PC-9 (cell line): ENCODE measurements at regions of chr14 and their contacts with region 1.

Region 1: DNA sequence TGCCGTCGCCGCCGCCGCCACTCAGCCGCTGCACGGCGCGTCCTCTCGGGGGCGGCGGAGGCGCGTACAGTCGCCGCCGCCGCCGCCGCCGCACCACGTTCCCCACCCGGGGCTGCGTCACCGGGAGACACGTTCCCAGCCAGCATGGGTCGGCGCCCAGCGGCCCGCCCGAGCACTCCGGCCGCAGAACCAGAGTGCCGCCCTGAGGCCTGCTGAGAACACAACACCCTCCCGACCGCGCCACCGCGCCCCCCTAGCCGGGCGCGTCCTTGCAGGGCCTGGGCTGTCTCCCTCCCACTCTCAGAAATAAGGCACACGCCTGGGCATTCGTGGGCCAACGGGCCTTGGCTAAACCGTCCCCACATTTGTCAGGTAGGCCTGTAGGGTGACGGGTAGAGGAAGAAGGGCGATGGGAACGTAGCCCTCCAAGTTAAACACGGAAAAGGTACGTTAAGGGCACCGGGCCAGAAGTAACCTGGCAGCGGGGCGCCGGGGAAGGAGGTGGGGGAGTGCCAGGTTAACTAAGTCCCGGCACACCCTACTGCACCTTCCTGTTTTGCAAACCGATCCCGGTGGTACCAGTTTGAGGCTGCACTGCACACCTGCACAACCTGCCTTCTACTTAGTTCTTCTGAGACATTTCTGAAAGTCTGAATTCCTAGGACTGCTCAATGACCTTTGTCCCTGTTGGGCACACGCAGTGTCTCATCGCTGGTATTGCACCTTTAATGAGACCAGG is at the start of gene MAP4K5:
- DNase-seq: peak; percentile 88 to 92
- H3K4me3 ChIP-seq: peak within 1 kb of the TSS; percentile 92
- H3K27ac ChIP-seq: peak within 1 kb of the TSS; percentile 64
- H3K4me1 ChIP-seq: peaks cover 47% of the 10 kb centered on the region
- H3K27me3 ChIP-seq: no peaks in the 10 kb centered on the region
- CTCF ChIP-seq: peak; percentile 84
- total RNA-seq, gene MAP4K5: 51.8 and 66.6 TPM in 2 replicates

Region 2: DNA sequence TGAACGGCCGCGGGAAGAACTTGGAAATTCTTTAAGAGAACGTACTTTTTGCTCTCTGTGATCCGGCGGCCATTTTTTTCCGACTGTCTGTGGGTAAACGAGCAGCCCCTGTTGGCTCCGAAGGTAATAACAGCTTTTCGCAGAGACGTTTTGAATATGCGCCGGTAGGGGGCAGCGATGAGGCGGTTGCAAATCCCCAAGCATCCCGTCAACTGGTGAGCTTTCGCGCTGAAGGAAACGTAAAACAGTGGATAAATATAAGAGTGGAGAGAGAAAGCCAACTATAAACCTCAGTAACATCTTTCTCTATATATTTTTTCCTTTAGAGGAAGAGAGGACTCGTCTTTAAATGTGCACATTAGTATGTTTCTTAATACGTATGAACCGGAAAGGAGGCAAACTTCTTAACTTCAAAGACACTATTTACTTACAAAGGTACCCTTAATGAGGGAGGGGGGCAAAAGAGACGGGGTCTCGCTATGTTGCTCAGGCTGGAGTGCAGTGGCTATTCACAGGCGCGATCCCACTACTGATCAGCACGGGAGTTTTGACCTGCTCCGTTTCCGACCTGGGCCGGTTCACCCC is 670.5 kb before region 1 on chr14:
- CTCF ChIA-PET with region 1: no interaction called
- POLR2A ChIA-PET with region 1: no interaction called
- intact Hi-C with region 1: loop called (anchors 2 kb)
- DNase-seq: peak; percentile 62 to 81
- H3K4me3 ChIP-seq: peak overlapping the region; percentile 100
- H3K27ac ChIP-seq: peak overlapping the region; percentile 92
- H3K4me1 ChIP-seq: peaks cover 35% of the 10 kb centered on the region; the same call in 1 of the 2 replicates
- H3K27me3 ChIP-seq: no peaks in the 10 kb centered on the region
- CTCF ChIP-seq: peak; percentile 100

Region 3: DNA sequence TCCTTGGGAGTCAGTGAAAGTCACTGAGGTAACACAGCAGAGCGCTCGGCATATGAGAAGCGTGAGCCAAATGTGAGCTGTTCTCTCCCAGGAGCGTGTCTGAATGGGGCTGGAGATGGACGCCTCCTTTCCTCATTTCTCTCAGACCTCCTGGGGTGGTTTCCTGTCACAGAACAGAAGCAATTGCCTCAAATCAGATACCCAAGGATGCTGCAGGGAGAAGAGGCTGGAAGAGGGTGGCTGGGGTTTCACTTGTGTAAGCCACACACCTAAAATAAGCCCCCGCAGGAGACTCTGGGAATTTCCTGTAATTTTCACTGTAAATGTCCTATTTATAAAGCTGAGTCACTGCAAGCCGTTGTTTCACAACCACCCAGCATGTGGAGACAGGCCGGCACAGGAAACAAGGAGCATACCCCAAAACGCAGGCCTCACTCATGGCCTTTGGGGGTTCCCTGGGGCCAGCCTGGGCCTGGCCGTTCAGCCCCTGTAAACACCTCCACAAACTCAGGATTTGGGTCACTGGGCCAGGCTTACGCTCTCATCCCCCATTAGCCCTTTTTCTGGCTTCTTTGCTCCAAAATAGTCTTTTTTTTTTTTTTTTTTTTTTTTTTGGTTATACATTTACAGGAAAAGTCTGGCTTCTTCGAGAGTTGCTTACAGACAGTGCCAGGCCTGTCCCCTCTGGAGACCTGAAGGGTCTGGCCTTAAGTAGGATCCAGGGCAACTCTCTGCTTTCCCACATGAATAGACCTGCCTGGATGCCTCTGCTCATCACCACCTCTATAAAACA is 471.6 kb before region 1 on chr14:
- CTCF ChIA-PET with region 1: no interaction called
- POLR2A ChIA-PET with region 1: no interaction called
- intact Hi-C with region 1: no loop called
- DNase-seq: peak; percentile 31 to 77
- H3K4me3 ChIP-seq: peak overlapping the region; percentile 37; the same call in 1 of the 2 replicates
- H3K27ac ChIP-seq: peak overlapping the region; percentile 97
- H3K4me1 ChIP-seq: peaks cover 49% of the 10 kb centered on the region
- H3K27me3 ChIP-seq: no peaks in the 10 kb centered on the region
- CTCF ChIP-seq: no peak

Region 4: DNA sequence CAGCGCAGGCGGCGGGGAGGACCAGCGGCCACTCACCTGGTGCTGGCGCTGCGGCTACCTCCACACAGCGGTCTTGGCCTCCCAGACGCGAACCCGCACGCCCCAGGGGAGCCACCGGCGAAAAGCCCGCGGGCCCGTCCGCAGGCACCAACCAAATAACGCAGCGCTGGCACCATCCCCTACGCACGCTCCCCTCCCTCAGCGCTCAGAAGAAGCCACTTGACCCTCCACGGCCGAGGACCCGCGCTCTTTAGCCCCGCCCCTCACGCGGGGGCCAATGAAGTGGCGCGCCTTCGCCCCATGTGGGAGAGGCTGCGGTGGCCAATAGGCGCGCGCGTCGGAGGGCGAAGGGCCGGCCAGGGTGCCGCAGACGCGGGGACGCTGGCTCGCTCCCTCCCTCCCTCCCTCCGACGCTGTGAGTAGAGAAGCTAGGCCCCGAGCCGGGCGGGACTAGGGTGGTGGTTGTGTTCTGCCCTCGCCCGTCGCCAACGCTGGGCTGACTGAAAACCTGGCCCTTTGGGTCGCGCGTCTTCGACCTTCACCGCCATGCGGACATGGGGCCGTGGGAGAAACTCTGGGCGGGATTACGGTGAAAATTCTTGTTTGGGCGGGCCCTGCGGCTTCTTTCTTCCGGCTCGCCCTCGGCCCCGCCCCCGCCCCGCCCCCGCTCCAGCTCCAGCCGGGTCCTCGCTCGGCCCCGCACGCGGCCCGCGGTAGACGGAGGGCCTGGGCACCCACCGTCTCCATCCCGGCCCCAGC is 220.5 kb before region 1 on chr14 and contains the starts of genes DMAC2L and L2HGDH:
- CTCF ChIA-PET with region 1: interaction called, 8 read pairs
- POLR2A ChIA-PET with region 1: no interaction called
- intact Hi-C with region 1: loop called (anchors 1 kb)
- DNase-seq: peak; percentile 83 to 95
- H3K4me3 ChIP-seq: peak within 1 kb of the TSS; percentile 85
- H3K27ac ChIP-seq: peak within 1 kb of the TSS; percentile 88
- H3K4me1 ChIP-seq: peaks cover 18% of the 10 kb centered on the region
- H3K27me3 ChIP-seq: no peaks in the 10 kb centered on the region
- CTCF ChIP-seq: peak; percentile 31
- total RNA-seq, gene DMAC2L: 15.4 and 18.5 TPM in 2 replicates
- total RNA-seq, gene L2HGDH: 15.5 and 18.6 TPM in 2 replicates

Region 5: GRCh38 chr14:50447461-50447860 is 85.2 kb before region 1 on chr14:
- CTCF ChIA-PET with region 1: no interaction called
- POLR2A ChIA-PET with region 1: no interaction called
- intact Hi-C with region 1: loop called (anchors 5 kb)
- DNase-seq: peak in 1 of 2 experiments; percentile 92
- H3K4me3 ChIP-seq: no peak overlapping the region
- H3K27ac ChIP-seq: peak overlapping the region; percentile 66
- H3K4me1 ChIP-seq: peaks cover 29% of the 10 kb centered on the region
- H3K27me3 ChIP-seq: no peaks in the 10 kb centered on the region
- CTCF ChIP-seq: no peak

Region 6: DNA sequence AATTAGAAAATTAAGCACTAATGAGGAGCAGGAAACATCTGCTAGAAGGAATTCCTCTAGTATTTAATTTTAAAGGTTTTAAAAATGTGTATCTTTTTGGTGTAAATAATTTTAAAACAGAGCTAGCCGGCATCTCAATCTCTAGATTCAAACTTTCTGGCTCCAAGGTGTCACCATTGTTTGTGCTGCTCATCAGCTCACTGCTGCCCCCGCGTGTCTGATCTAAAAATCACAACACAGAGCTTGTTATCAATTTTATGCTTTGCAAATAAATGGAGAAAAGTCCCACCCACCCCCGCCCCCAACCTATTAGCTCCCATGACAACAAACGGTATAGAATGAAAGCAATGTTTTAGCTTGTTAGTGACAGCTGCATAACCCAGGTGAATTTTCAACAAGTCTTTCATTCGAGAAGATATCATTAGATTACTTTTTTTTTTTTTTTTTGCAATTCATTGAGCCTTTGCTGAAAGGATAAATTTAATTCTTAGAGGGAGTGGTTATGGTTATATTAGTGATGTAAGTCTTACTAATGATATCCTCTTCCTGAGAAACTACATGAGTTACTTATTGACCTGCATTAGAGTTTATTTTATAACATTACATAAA is 327.9 kb after region 1 on chr14:
- CTCF ChIA-PET with region 1: no interaction called
- POLR2A ChIA-PET with region 1: no interaction called
- intact Hi-C with region 1: loop called (anchors 1 kb)
- DNase-seq: peak; percentile 64 to 80
- H3K4me3 ChIP-seq: peak overlapping the region; percentile 56; the same call in 1 of the 2 replicates
- H3K27ac ChIP-seq: no peak overlapping the region
- H3K4me1 ChIP-seq: no peaks in the 10 kb centered on the region
- H3K27me3 ChIP-seq: no peaks in the 10 kb centered on the region
- CTCF ChIP-seq: peak; percentile 78

Region 7: GRCh38 chr14:51023964-51024363 is 491.3 kb after region 1 on chr14:
- CTCF ChIA-PET with region 1: no interaction called
- POLR2A ChIA-PET with region 1: no interaction called
- intact Hi-C with region 1: no loop called
- DNase-seq: no peak
- H3K4me3 ChIP-seq: no peak overlapping the region
- H3K27ac ChIP-seq: no peak overlapping the region
- H3K4me1 ChIP-seq: no peaks in the 10 kb centered on the region
- H3K27me3 ChIP-seq: no peaks in the 10 kb centered on the region
- CTCF ChIP-seq: no peak